ENCODE measurements at regions of chr5 and their contacts with region 1.

Region 1: DNA sequence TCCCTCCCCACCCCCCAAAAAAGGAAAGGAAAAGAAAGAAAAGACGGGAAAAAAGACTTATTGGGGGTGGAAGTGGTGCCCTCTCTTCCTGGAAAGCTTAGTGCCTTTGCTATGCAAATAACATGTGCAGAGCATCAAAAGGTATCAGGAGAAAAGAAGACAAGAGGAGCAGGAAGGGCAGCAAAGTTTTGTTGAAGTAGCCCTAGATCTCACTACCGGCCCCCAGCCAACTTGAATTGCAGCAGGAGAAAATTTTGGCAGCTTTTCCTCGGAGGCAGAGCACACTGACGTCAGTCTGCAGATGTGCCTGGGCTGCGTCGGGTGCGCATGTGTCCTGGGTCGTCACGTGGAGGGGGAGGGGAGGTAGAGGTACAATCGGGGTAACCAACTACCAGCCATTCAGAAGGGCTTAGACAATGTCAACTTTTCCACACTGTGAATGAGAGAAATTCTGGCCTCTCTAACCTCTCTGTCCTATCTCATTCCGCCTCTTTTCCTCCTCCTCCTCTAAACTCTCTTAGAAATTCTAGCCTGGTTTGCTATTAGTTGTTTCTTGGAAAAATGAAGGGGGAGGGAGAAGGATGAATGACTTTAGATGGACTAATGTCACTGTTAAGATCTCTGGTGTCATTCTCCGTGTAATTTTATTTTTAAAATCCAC is at the start of gene ADAMTS6:
- DNase-seq: peak; percentile 71
- CTCF ChIP-seq: no peak

Region 2: GRCh38 chr5:64634997-64635686 is 846.6 kb before region 1 on chr5:
- in situ Hi-C with region 1: loop called (anchors 25 kb)
- DNase-seq: peak; percentile 11
- CTCF ChIP-seq: peak; percentile 68

Region 3: DNA sequence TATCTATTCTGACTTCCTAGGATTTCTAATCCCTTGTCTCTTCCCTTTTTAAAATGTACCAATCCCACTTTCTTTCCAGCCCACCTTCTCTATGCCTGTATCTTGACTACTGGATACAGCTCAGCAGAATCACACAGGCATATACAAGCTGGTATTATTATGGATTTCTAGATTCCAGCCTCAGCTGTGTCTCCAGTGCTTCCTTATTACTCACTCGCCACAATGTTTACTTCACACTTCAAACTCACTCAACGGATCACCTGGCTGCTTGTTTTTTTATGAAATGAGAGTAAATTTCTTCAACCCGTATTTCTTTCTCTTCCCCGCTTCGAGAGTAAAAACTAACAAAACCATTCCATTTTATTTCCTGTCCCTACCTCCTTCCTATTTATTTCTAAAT is 674.2 kb before region 1 on chr5:
- in situ Hi-C with region 1: loop called (anchors 10 kb)
- DNase-seq: no peak
- CTCF ChIP-seq: no peak

Region 4: DNA sequence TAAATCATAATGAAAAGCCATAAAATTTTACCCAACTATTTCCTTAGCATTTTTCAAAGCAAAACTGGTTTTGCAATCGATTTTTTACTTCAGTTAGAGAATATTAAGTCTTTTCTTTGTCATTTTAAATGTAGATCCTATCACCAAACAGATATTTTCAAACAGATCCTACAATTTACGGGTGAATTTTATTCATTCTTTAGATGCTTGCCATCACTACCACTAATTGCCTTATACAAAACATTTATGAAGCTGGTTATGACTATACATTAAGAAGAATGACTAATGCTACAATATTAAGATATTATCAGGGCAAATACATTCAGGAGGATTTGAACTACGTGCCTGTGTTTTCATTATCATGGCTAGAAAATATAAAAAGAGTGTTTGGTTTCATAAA is 516.2 kb before region 1 on chr5:
- in situ Hi-C with region 1: loop called (anchors 10 kb)
- DNase-seq: no peak
- CTCF ChIP-seq: no peak

Region 5: GRCh38 chr5:65076251-65076869 is 405.4 kb before region 1 on chr5:
- in situ Hi-C with region 1: loop called (anchors 25 kb)
- DNase-seq: peak; percentile 32
- CTCF ChIP-seq: peak; percentile 42